Activated CD4-positive, alpha-beta memory T cell treated with anti-CD3 and anti-CD28 coated beads for 36 hours (primary cell): ENCODE measurements at regions of chr3 and their contacts with region 1.

Region 1: GRCh38 chr3:51434746-51435327 is 43.8 kb downstream of the RBM15B start:
- DNase-seq: peak; percentile 56
- H3K4me3 Mint-ChIP-seq: no peak overlapping the region
- H3K27ac Mint-ChIP-seq: no peak overlapping the region
- H3K4me1 Mint-ChIP-seq: peaks cover 7% of the 10 kb centered on the region
- H3K27me3 Mint-ChIP-seq: no peaks in the 10 kb centered on the region

Region 2: GRCh38 chr3:51384726-51385473 is 49.9 kb before region 1 on chr3 and contains the start of gene MANF:
- CTCF ChIA-PET with region 1: interaction called, 19 read pairs
- POLR2A ChIA-PET with region 1: no interaction called
- intact Hi-C with region 1: loop called (anchors 1 kb)
- DNase-seq: peak; percentile 99
- H3K4me3 Mint-ChIP-seq: peak within 1 kb of the TSS; percentile 93
- H3K27ac Mint-ChIP-seq: peak within 1 kb of the TSS; percentile 98
- H3K4me1 Mint-ChIP-seq: peaks cover 50% of the 10 kb centered on the region
- H3K27me3 Mint-ChIP-seq: no peaks in the 10 kb centered on the region
- total RNA-seq, gene MANF: 151 to 162 TPM

Region 3: DNA sequence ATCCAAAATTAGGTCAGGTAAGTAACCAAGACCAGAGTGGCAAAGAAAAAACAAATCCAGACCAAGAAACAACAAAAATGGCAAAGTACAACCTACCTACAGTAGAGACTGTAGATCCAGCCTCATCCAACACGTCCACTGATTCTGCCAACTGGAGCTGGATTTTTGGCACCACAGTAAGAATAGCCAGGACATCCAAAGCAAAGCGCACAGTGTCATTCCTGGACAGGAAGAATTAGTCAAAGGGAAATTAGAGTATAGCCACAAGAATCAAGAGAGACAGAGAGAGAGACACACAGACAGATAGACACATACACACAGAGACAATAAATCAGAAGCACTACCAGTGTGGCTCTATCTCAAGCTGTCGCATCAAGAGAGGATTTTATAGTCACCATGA is 12.6 kb before region 1 on chr3:
- CTCF ChIA-PET with region 1: interaction called, 11 read pairs
- POLR2A ChIA-PET with region 1: no interaction called
- intact Hi-C with region 1: no loop called
- DNase-seq: no peak
- H3K4me3 Mint-ChIP-seq: no peak overlapping the region
- H3K27ac Mint-ChIP-seq: no peak overlapping the region
- H3K4me1 Mint-ChIP-seq: peaks cover 2% of the 10 kb centered on the region
- H3K27me3 Mint-ChIP-seq: no peaks in the 10 kb centered on the region

Region 4: GRCh38 chr3:51445544-51446280 is 10.9 kb after region 1 on chr3:
- CTCF ChIA-PET with region 1: interaction called, 19 read pairs
- POLR2A ChIA-PET with region 1: interaction called, 3 read pairs
- intact Hi-C with region 1: no loop called
- DNase-seq: no peak
- H3K4me3 Mint-ChIP-seq: no peak overlapping the region
- H3K27ac Mint-ChIP-seq: peak overlapping the region; percentile 23
- H3K4me1 Mint-ChIP-seq: peaks cover 33% of the 10 kb centered on the region
- H3K27me3 Mint-ChIP-seq: no peaks in the 10 kb centered on the region